ENCODE measurements at regions of chr1 and their contacts with region 1.

Region 1: DNA sequence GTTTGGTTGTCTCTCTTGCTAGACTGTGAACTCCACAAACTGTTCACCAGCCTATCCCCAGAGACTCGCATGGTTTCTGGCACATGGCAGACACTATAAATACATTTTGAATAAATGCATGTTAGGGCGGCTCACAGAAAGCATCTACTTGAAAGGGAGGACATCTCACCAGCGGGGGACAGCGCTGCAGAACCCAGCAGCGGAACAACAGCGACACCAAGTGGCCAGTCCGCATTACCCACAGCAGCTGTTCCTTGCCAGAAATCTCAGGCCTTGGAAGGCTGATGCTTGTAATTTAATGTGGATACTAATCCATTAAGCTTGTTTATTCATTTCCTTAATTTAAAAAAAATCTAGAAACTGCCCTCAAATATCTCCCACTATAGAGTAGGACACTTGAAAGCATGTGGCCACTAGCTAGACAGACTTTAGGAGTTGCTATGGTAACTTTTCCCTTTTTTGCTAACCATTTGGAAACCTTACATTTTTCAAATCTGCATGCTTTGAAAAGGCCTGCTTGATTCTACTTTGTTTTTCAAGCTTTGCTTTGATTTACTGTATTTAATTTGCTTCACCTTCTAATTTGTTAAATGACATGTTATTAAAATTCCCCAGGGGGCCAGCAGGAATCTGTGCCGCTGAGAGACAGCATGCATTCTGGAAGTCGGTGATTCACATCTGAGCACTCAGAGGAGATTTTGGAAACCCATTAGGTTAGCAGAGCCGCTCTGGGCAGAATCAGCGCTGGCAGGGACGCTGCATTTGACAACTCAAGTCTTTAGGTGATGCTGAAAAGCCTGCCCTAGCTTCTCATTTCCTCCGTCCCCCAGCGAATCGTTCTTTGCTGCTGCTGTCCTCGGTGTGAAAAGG is 63.5 kb upstream of the SSX2IP start:
- DNase-seq: peak; percentile 66 to 78 (median 76)
- ATAC-seq: peak; percentile 94
- H3K4me3 ChIP-seq: no peak overlapping the region
- H3K27ac ChIP-seq: no peak overlapping the region
- H3K4me1 ChIP-seq: no peaks in the 10 kb centered on the region; a peak in 1 of 5 replicates
- H3K27me3 ChIP-seq: peaks cover 0 to 4% of the 10 kb centered on the region in 2 experiments; a peak in 2 of 5 replicates
- CTCF ChIP-seq: peak; percentile 95 to 97 (median 96)
- EP300 ChIP-seq: no peak
- POLR2A ChIP-seq: no peak
- RAD21 ChIP-seq: peak; percentile 95 to 98

Region 2: GRCh38 chr1:84143796-84144565 is 609.8 kb before region 1 on chr1 and contains the start of gene PRKACB:
- CTCF ChIA-PET with region 1: interaction called, 3 read pairs
- POLR2A ChIA-PET with region 1: no interaction called
- in situ Hi-C with region 1: loop called (anchors 25 kb)
- intact Hi-C with region 1: no loop called
- DNase-seq: no peak
- ATAC-seq: no peak
- H3K4me3 ChIP-seq: no peak within 1 kb of the TSS
- H3K27ac ChIP-seq: no peak within 1 kb of the TSS
- H3K4me1 ChIP-seq: no peaks in the 10 kb centered on the region
- H3K27me3 ChIP-seq: no peaks in the 10 kb centered on the region
- CTCF ChIP-seq: no peak
- EP300 ChIP-seq: no peak
- POLR2A ChIP-seq: no peak
- RAD21 ChIP-seq: no peak
- polyA plus RNA-seq, gene PRKACB: 1.1 to 1.5 TPM

Region 3: GRCh38 chr1:84442256-84442655 is 311.5 kb before region 1 on chr1:
- CTCF ChIA-PET with region 1: interaction called, 15 read pairs
- POLR2A ChIA-PET with region 1: no interaction called
- in situ Hi-C with region 1: loop called (anchors 5 kb)
- intact Hi-C with region 1: loop called (anchors 1 kb)
- DNase-seq: peak in 3 of 4 experiments; percentile 16 to 65 (median 34)
- ATAC-seq: peak; percentile 91
- H3K4me3 ChIP-seq: no peak overlapping the region
- H3K27ac ChIP-seq: no peak overlapping the region
- H3K4me1 ChIP-seq: no peaks in the 10 kb centered on the region; a peak in 1 of 5 replicates
- H3K27me3 ChIP-seq: no peaks in the 10 kb centered on the region
- CTCF ChIP-seq: peak; percentile 42 to 80 (median 52); a peak in 5 of 6 replicates
- EP300 ChIP-seq: no peak
- POLR2A ChIP-seq: no peak
- RAD21 ChIP-seq: peak; percentile 93 to 98

Region 4: DNA sequence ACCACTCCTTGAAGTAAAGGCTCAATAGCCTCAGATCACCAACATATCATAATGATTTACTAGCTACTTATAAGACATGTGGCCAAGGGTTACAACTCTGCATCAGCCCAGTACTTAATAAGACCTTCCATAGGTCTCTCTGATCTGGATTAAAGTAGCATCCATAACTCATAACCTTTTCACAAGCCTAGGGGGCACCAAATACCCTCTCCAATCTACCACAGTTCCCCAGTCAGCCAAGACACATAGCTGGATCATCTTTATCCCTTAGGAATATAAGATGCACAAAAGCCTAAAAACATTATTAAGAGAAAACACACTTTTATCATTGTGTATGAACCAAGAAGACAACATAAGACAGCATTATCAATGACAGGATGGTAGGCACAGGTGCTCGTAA is 85.6 kb before region 1 on chr1:
- CTCF ChIA-PET with region 1: interaction called, 13 read pairs
- POLR2A ChIA-PET with region 1: no interaction called
- in situ Hi-C with region 1: loop called (anchors 5 kb)
- intact Hi-C with region 1: loop called (anchors 1 kb)
- DNase-seq: peak in 3 of 4 experiments; percentile 13 to 40 (median 28)
- ATAC-seq: peak; percentile 86
- H3K4me3 ChIP-seq: no peak overlapping the region
- H3K27ac ChIP-seq: no peak overlapping the region
- H3K4me1 ChIP-seq: peaks cover 3 to 5% of the 10 kb centered on the region in 2 experiments; a peak in 2 of 5 replicates
- H3K27me3 ChIP-seq: no peaks in the 10 kb centered on the region
- CTCF ChIP-seq: peak; percentile 43 to 68 (median 48); a peak in 5 of 6 replicates
- EP300 ChIP-seq: no peak
- POLR2A ChIP-seq: no peak
- RAD21 ChIP-seq: peak; percentile 58 to 76

Measured in K562 (cell line).